ENCODE measurements at regions of chr2 and their contacts with region 1.

Region 1: DNA sequence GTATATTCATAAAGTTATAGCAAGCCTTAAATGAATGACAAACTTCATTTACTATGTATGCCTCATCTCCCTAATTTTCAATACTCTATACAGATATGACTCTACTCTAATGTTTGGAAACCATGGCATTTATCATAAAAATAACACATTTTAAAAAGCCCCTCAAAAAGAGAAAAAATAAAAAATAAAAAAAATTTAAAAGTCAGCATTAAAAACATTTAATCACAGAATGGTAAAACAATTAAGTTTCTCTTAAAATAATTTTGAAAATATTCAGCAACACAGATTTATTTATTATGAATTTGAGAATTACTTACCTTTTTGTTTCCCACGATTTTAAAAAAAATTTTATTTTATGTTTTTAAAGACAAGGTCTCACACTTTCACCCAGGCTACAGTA is 65.0 kb upstream of the CDKL4 start:
- DNase-seq: no peak
- H3K4me3 ChIP-seq: no peak overlapping the region
- H3K27ac ChIP-seq: no peak overlapping the region
- H3K27me3 ChIP-seq: no peaks in the 10 kb centered on the region
- CTCF ChIP-seq: no peak

Region 2: GRCh38 chr2:38178547-38179419 is 1130.0 kb before region 1 on chr2:
- CTCF ChIA-PET with region 1: no interaction called
- POLR2A ChIA-PET with region 1: no interaction called
- DNase-seq: no peak
- H3K4me3 ChIP-seq: no peak overlapping the region
- H3K27ac ChIP-seq: no peak overlapping the region
- H3K27me3 ChIP-seq: peaks cover 3% of the 10 kb centered on the region
- CTCF ChIP-seq: no peak

Region 3: DNA sequence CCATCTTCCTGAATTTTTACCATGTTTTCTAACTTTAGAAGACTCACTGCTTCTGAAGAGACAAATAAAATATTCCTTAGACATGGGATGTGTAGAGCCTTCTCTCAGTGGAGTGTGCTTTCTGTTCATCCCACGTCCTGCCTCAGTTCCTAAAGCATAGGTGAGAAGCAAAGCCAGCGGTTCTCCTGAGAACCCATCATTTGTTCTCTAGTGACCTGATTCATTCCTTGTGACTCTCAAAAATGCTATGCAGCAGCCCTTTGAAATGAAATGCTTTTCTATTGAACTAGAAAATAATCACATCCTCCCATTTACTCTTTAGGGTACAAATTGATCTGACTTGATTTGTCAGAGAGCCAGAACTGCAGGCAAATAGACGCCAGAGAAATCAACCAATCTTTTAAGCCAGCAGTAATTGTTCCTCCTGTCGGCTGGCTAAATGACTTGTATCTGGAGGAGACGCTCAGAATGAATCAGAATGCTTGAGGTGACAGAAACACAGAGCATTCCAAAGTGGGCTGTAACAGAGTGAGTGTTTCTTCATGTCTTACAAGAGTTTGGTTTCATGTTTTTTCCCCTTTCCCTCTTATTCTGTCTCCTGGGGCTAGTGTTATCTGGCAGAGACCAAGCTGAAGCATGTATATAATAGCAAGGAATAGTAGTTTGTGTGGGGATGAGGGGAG is 275.6 kb after region 1 on chr2:
- CTCF ChIA-PET with region 1: no interaction called
- POLR2A ChIA-PET with region 1: interaction called, 10 read pairs
- DNase-seq: peak; percentile 26
- H3K4me3 ChIP-seq: no peak overlapping the region
- H3K27ac ChIP-seq: no peak overlapping the region
- H3K27me3 ChIP-seq: no peaks in the 10 kb centered on the region
- CTCF ChIP-seq: no peak